Activated B cell treated with CpG ODN at 0.5 μM for 24 hours (primary cell): ENCODE measurements at regions of chr7 and their contacts with region 1.

Region 1: DNA sequence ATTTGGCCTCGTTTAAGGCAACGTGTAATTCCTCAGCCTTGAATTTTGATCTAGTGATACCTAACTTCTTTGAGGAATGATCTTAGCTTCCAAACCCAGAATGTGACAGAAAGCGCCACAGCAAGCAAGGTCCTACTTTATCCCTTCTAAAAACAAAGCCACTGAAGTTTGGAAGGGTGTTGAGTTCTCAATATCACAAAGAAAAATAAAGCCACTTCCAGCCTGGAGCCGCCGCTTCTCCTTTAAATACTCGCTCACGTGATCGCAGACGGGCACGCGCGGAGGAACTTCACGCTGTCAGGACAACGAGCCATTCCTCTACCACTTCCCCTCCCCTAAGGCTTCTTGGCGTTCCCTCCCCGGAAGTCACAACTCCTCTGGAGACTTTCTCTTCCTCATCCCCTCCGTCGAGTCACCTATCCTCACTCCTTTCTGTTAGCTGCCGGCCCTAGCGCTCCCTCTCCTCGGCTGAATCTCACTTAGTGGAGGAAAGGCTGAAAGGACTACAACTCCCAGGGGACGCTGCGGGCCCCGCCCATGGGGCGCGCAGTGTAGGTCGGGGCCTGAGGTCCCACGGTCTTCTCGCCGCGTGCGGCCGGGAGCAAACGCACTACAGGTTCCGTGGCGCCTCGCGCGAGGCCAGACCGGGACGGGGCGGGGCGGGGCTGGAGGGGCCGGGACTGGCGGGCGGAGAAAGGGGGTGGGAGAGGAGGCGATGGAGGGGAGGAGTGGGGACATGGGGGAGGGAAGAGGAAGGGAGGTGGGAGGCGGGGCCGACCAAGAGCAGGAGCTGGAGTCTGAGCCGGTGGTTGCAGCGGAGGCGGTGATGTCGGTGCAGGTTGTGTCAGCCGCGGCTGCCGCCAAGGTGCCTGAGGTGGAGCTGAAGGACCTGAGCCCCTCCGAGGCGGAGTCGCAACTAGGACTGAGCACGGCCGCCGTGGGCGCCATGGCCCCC is at the start of gene AHCYL2:
- DNase-seq: peak; percentile 95
- ATAC-seq: peak; percentile 88
- H3K4me3 Mint-ChIP-seq: peak within 1 kb of the TSS; percentile 95
- H3K27ac Mint-ChIP-seq: peak within 1 kb of the TSS; percentile 97
- H3K4me1 Mint-ChIP-seq: peaks cover 33% of the 10 kb centered on the region
- H3K27me3 Mint-ChIP-seq: no peaks in the 10 kb centered on the region
- CTCF ChIP-seq: no peak
- total RNA-seq, gene AHCYL2: 10.9 and 11.6 TPM in 2 replicates

Region 2: GRCh38 chr7:128455551-128456254 is 768.8 kb before region 1 on chr7 and contains the start of gene HILPDA:
- CTCF ChIA-PET with region 1: no interaction called
- POLR2A ChIA-PET with region 1: no interaction called
- intact Hi-C with region 1: loop called (anchors 1 kb)
- DNase-seq: peak; percentile 95
- ATAC-seq: peak; percentile 87
- H3K4me3 Mint-ChIP-seq: peak within 1 kb of the TSS; percentile 95
- H3K27ac Mint-ChIP-seq: peak within 1 kb of the TSS; percentile 100
- H3K4me1 Mint-ChIP-seq: peaks cover 44% of the 10 kb centered on the region
- H3K27me3 Mint-ChIP-seq: no peaks in the 10 kb centered on the region
- CTCF ChIP-seq: no peak
- total RNA-seq, gene HILPDA: 14.5 and 17.0 TPM in 2 replicates

Region 3: GRCh38 chr7:128862571-128863432 is 361.7 kb before region 1 on chr7 and contains the start of gene ATP6V1F:
- CTCF ChIA-PET with region 1: no interaction called
- POLR2A ChIA-PET with region 1: no interaction called
- intact Hi-C with region 1: loop called (anchors 1 kb)
- DNase-seq: peak; percentile 99
- ATAC-seq: peak; percentile 92
- H3K4me3 Mint-ChIP-seq: peak within 1 kb of the TSS; percentile 97
- H3K27ac Mint-ChIP-seq: peak within 1 kb of the TSS; percentile 96
- H3K4me1 Mint-ChIP-seq: peaks cover 30% of the 10 kb centered on the region
- H3K27me3 Mint-ChIP-seq: no peaks in the 10 kb centered on the region
- CTCF ChIP-seq: no peak
- total RNA-seq, gene ATP6V1F: 100.0 and 113 TPM in 2 replicates

Region 4: GRCh38 chr7:129210256-129210988 is 14.1 kb before region 1 on chr7:
- CTCF ChIA-PET with region 1: interaction called, 3 read pairs
- POLR2A ChIA-PET with region 1: no interaction called
- intact Hi-C with region 1: loop called (anchors 2 kb)
- DNase-seq: peak; percentile 77
- ATAC-seq: peak; percentile 91
- H3K4me3 Mint-ChIP-seq: no peak overlapping the region
- H3K27ac Mint-ChIP-seq: no peak overlapping the region
- H3K4me1 Mint-ChIP-seq: peaks cover 5% of the 10 kb centered on the region
- H3K27me3 Mint-ChIP-seq: no peaks in the 10 kb centered on the region
- CTCF ChIP-seq: peak; percentile 66

Region 5: GRCh38 chr7:129271500-129272355 is 47.2 kb after region 1 on chr7:
- CTCF ChIA-PET with region 1: interaction called, 169 read pairs
- POLR2A ChIA-PET with region 1: interaction called, 10 read pairs
- intact Hi-C with region 1: loop called (anchors 1 kb)
- DNase-seq: no peak
- ATAC-seq: peak; percentile 83
- H3K4me3 Mint-ChIP-seq: peak overlapping the region; percentile 69
- H3K27ac Mint-ChIP-seq: peak overlapping the region; percentile 69
- H3K4me1 Mint-ChIP-seq: peaks cover 21% of the 10 kb centered on the region
- H3K27me3 Mint-ChIP-seq: no peaks in the 10 kb centered on the region
- CTCF ChIP-seq: peak; percentile 28

Region 6: DNA sequence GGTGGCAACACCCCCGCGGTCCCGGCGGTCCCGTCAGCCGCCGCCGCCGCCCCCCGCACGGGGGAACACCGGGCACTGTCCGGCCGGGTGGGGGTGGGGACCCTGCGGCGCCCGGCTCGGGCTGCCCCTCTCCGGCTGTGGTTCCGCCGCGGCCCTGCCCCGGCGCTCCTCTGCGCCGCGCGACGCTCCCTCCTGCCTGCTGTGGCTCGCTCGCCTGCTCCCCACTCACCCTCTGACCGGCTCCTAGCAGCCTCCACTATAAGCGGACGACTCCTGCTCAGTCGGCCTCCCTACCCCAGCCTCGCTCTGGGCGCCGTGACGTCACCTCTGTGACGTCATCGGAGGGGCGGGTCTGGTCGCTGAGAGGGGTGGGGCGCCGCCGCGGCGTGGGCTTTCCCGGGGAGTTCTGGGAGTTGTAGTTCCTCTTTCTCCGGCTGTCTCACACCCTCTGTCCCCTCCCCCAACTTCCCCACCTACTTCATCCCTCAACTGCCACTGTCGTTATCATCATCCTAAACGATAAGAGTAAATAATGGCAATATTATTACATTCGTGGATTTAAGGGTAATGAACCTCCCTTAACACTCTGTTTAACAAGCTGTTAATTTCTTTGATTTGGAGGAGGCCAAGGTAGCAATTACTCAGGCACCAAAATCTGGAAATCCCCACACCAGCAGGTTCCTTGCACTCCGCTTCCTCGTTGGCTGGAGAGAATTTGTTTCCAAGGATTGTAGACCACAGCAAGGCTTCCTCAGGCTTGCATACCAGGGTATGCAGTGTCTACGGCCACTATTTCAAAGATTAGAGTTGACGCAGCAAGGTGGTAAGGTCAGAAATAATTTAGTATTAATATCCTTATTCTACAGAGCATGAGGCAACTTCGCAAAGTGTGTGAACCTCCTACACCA is 728.4 kb after region 1 on chr7 and contains the start of gene UBE2H:
- CTCF ChIA-PET with region 1: no interaction called
- POLR2A ChIA-PET with region 1: no interaction called
- intact Hi-C with region 1: loop called (anchors 5 kb)
- DNase-seq: peak; percentile 89
- ATAC-seq: peak; percentile 73
- H3K4me3 Mint-ChIP-seq: peak within 1 kb of the TSS; percentile 98
- H3K27ac Mint-ChIP-seq: peak within 1 kb of the TSS; percentile 98
- H3K4me1 Mint-ChIP-seq: peaks cover 10% of the 10 kb centered on the region
- H3K27me3 Mint-ChIP-seq: no peaks in the 10 kb centered on the region
- CTCF ChIP-seq: no peak
- total RNA-seq, gene UBE2H: 28.8 and 32.6 TPM in 2 replicates